ENCODE measurements at regions of chr6 and their contacts with region 1.

Region 1: GRCh38 chr6:2542858-2543218 is 207.9 kb downstream of the MYLK4 start:
- DNase-seq: peak; percentile 96 to 99 (median 98)
- H3K4me3 ChIP-seq: peak overlapping the region in 1 of 7 experiments; percentile 30
- H3K27ac ChIP-seq: no peak overlapping the region
- H3K4me1 ChIP-seq: peaks cover 15 to 27% (median 23%) of the 10 kb centered on the region in 4 experiments
- H3K27me3 ChIP-seq: peaks cover 3 to 36% (median 21%) of the 10 kb centered on the region in 5 experiments

Region 2: DNA sequence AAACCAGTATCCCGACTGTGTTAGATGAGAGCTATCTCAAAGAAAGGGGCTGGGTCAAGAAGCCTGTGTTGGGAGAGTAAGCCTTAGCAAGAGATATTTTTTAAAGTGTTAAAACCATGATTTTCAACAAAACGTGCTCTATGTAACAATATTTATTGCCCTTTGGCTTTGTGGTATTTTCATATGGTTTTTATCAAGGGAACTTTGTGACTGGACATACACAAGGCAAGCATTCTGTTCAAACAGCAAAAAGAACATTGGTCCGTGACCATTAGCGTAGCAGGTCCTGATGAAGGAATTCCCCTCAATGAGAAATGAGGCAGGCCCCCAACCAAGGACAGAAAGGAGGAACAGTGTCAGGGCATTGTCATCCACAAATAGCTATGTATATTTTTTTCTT is 14.7 kb before region 1 on chr6:
- CTCF ChIA-PET with region 1: interaction called, 14 read pairs
- POLR2A ChIA-PET with region 1: no interaction called
- DNase-seq: no peak
- H3K4me3 ChIP-seq: no peak overlapping the region
- H3K27ac ChIP-seq: no peak overlapping the region
- H3K4me1 ChIP-seq: peaks cover 0 to 4% (median 0%) of the 10 kb centered on the region in 4 experiments
- H3K27me3 ChIP-seq: peaks cover 0 to 10% (median 0%) of the 10 kb centered on the region in 5 experiments

Measured in common myeloid progenitor, CD34-positive (primary cell).